ENCODE measurements at regions of chr14 and their contacts with region 1.

Region 1: GRCh38 chr14:69242311-69243224 is 17.4 kb upstream of the GALNT16 start:
- DNase-seq: peak; percentile 83
- CTCF ChIP-seq: peak; percentile 64

Region 2: DNA sequence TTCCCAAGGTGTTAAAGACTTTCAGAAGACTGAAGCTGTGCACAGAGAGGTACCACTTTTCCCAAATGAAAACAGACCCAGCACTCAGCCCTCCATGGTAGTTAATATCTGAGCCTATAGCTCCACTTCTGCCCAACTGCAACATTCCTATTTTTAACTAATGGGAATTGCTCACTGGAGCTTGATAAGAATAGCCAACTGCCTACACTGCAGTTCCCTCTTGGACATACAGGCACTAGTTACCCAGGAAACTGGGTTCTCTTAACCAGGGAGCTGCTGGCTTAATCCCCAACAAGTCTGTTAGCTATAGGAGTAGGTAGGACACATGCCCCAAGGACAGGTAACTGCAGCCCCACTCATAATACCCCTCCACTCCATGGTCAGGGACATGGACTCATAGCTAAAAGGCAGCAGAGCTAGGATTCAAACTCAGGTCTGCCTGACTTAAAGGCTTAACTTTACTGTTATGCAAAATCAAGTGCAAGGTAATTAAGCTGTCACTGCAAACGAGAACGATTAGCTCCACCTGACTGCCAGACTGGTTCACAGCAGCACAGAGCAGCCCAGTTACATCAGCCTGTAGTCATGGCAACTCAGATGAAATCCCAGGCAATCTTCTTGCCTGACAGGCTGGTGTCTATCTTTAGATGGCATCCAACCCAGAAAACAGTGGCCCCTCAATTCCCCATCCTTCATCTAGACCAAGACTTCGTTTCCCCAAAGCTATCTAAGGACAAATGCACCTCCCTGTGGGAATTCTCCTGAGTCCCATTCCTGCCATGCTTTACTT is 186.4 kb before region 1 on chr14:
- in situ Hi-C with region 1: no loop called
- DNase-seq: no peak
- CTCF ChIP-seq: no peak

Region 3: DNA sequence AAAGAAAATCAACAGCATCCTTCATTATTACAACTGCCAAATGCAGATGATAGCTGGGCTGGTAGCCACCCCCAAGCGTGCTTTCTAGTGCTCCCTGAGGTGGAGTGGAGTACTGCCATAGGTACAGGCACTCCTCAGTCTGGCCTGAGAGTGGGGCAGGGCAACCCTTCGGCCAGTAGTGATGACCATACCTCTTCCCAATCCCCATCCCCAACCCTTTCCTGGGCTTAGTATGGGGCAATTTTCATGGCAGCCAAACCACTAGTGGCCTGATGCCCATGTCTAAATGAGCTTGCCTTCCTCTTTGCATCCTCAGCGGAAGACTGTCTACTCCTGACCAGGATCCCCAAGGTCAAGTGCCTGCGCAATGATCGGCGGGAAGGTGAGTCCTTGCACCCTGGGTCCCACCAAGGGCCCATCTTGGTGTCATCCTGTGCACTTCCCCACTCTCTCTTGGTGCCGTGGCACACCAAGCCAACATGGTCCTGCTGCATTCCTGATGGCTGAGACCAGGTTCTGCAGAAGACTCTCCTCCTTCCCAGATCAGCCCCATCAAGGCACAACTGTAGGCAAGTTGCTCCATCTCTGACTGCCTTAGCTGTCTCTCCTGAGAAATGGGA is 83.2 kb after region 1 on chr14:
- in situ Hi-C with region 1: no loop called
- DNase-seq: no peak
- CTCF ChIP-seq: no peak

Region 4: DNA sequence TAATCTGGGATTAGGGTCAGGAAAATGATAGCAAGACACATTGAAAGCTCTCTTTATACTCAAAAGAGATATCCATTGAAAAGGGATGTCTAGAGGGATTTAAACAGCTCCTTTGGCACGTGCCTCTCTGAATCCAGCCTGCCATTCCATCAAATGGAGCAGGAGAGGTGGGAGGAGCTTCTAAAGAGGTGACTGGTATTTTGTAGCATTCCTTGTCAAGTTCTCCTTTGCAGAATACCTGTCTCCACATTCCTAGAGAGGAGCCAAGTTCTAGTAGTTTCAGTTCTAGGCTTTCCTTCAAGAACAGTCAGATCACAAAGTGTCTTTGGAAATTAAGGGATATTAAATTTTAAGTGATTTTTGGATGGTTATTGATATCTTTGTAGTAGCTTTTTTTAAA is 216.6 kb after region 1 on chr14:
- in situ Hi-C with region 1: loop called (anchors 10 kb)
- DNase-seq: no peak
- CTCF ChIP-seq: no peak

Region 5: GRCh38 chr14:69715725-69716477 is 473.3 kb after region 1 on chr14:
- in situ Hi-C with region 1: loop called (anchors 25 kb)
- DNase-seq: no peak
- CTCF ChIP-seq: no peak

Measured in GM13977 (cell line).